Breast epithelium (tissue), 4 donors: ENCODE measurements at regions of chr1 and their contacts with region 1.

Region 1: GRCh38 chr1:39816415-39817090 is 27.9 kb upstream of the BMP8B start:
- DNase-seq: peak; percentile 62 to 76
- H3K4me3 ChIP-seq: no peak overlapping the region
- H3K27ac ChIP-seq: no peak overlapping the region
- H3K4me1 ChIP-seq: no peaks in the 10 kb centered on the region
- H3K27me3 ChIP-seq: peaks cover 0 to 4% of the 10 kb centered on the region in 2 donors
- CTCF ChIP-seq: peak; percentile 91 to 97 (median 95)
- POLR2A ChIP-seq: no peak

Region 2: GRCh38 chr1:39297551-39297950 is 519.0 kb before region 1 on chr1:
- intact Hi-C with region 1: no loop called
- DNase-seq: no peak
- H3K4me3 ChIP-seq: no peak overlapping the region
- H3K27ac ChIP-seq: peak overlapping the region in 1 of 2 donors; percentile 10
- H3K4me1 ChIP-seq: no peaks in the 10 kb centered on the region
- H3K27me3 ChIP-seq: no peaks in the 10 kb centered on the region
- CTCF ChIP-seq: no peak
- POLR2A ChIP-seq: no peak

Region 3: DNA sequence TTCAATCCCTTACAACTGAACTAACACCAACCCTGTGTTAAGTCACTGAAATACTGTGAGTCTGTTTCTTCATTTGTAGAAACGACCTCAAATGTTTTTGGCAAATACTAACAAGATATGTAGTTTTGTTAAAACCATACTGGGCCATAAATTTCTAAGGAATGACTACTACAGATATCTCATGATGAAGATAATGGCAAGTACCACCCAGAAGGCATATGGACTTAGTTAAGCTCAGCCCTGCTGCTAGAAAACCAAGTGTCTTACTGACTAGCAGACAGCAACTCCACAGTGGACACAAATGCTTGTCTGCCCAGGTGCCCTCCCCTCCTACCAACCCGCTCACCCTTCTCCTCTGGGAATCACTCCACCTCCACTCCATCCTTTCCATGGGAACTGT is 16.6 kb after region 1 on chr1:
- intact Hi-C with region 1: no loop called
- DNase-seq: no peak
- H3K4me3 ChIP-seq: no peak overlapping the region
- H3K27ac ChIP-seq: no peak overlapping the region
- H3K4me1 ChIP-seq: no peaks in the 10 kb centered on the region
- H3K27me3 ChIP-seq: no peaks in the 10 kb centered on the region
- CTCF ChIP-seq: no peak
- POLR2A ChIP-seq: no peak

Region 4: DNA sequence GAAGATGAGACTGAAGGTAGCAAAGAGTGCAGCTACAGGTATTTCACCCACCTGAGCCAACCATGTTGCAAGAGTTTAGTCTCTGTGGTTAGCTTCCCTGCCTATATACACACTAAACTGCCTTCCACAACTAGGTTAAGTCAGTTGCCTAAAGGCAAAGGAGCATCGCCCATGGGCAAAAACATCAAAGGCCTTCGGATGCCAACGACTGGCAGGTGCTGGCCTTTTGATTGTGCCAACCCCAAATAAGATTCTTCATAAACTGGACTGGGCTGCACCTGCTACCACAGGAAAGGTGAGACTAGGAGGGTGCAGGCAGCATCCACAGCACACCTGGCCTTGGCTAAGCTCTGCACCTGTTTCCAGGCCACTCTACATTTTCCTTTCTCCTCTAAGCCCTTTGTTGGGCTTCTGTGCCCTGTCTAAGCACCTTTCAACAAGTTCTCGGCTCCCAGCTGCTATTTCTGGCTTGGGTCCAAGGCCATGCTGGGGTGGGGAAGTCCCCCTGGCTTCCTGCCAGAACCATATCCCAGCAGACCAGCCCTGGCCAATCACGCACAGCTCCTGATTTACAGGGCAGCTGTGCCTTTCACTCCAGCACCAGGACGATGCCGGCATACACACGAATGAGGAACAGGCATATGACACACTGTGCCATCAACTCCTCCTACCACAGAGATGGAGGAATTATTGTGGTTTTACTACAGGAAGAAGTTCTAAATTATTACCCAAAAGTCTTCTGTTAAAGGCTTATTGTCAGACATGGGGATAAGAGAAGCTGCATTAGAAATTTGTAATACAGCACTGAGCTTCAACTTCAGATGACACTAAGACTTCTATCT is 28.9 kb after region 1 on chr1:
- intact Hi-C with region 1: no loop called
- DNase-seq: peak; percentile 57 to 63
- H3K4me3 ChIP-seq: no peak overlapping the region
- H3K27ac ChIP-seq: peak overlapping the region in 1 of 2 donors; percentile 16
- H3K4me1 ChIP-seq: peaks cover 0 to 11% of the 10 kb centered on the region in 2 donors
- H3K27me3 ChIP-seq: no peaks in the 10 kb centered on the region
- CTCF ChIP-seq: no peak
- POLR2A ChIP-seq: no peak

Region 5: GRCh38 chr1:39901698-39902459 is 85.3 kb after region 1 on chr1 and contains the start of gene MYCL:
- intact Hi-C with region 1: loop called (anchors 5 kb)
- DNase-seq: peak; percentile 82 to 88
- H3K4me3 ChIP-seq: peak within 1 kb of the TSS; percentile 46 to 85 (median 69)
- H3K27ac ChIP-seq: peak within 1 kb of the TSS; percentile 34 to 40
- H3K4me1 ChIP-seq: peaks cover 0 to 8% of the 10 kb centered on the region in 2 donors
- H3K27me3 ChIP-seq: peaks cover 0 to 2% of the 10 kb centered on the region in 2 donors
- CTCF ChIP-seq: peak; percentile 44 to 84 (median 72)
- POLR2A ChIP-seq: no peak
- total RNA-seq, gene MYCL: 0.32 to 5.3 (median 0.98) TPM

Region 6: GRCh38 chr1:39973503-39974135 is 157.1 kb after region 1 on chr1:
- intact Hi-C with region 1: loop called (anchors 5 kb)
- DNase-seq: peak; percentile 69 to 82
- H3K4me3 ChIP-seq: no peak overlapping the region
- H3K27ac ChIP-seq: no peak overlapping the region
- H3K4me1 ChIP-seq: no peaks in the 10 kb centered on the region
- H3K27me3 ChIP-seq: no peaks in the 10 kb centered on the region
- CTCF ChIP-seq: peak; percentile 92 to 98 (median 95)
- POLR2A ChIP-seq: no peak